Endothelial cell of umbilical vein (primary cell): ENCODE measurements at regions of chr4 and their contacts with region 1.

Region 1: DNA sequence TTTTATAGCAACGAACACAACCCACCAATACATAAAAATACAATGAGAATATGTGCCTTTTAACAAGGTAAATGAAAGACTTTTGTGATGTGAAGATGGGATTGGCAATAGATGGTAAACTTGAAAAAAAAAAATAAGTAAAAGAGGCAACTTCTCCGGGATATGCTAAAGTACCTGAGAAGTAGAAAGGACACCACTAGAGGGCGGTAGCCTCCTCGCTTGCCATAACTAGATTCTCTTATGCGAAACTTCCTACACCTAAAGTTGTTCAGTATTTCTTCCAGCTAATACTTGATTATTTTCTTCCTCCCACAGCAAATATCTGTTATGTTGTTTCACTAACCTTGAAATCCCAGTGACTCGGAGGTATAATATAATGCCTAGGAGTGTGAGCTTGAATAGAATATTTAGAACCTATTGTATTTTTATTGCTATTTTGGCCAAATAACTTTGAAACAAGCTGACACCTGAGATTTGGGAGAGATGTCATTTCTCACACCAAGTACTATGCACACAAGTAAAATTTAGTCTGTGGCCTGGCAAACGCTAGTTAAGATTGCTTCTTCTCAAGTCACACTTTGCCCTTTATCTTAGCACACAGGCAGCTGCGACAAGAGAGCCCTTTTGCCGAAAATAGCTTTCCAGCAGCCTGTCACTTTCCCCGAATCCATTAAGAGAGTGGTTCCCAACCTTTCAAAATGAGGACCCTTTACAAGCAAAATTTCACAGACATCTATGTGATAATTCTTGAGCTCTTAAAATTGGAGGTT is 44.9 kb upstream of the PDLIM5 start:
- DNase-seq: peak; percentile 86
- H3K4me3 ChIP-seq: no peak overlapping the region
- H3K27ac ChIP-seq: no peak overlapping the region
- H3K4me1 ChIP-seq: peaks cover 9% of the 10 kb centered on the region
- H3K27me3 ChIP-seq: no peaks in the 10 kb centered on the region
- CTCF ChIP-seq: peak; percentile 74 to 77
- POLR2A ChIP-seq: no peak

Region 2: GRCh38 chr4:94332983-94333590 is 73.8 kb before region 1 on chr4:
- CTCF ChIA-PET with region 1: interaction called, 11 read pairs
- POLR2A ChIA-PET with region 1: no interaction called
- dilution Hi-C with region 1: no loop called
- intact Hi-C with region 1: no loop called
- DNase-seq: peak; percentile 28
- H3K4me3 ChIP-seq: no peak overlapping the region
- H3K27ac ChIP-seq: no peak overlapping the region
- H3K4me1 ChIP-seq: no peaks in the 10 kb centered on the region
- H3K27me3 ChIP-seq: no peaks in the 10 kb centered on the region
- CTCF ChIP-seq: peak in 1 of 2 donors; percentile 32
- POLR2A ChIP-seq: no peak

Region 3: GRCh38 chr4:94451695-94452475 is 45.0 kb after region 1 on chr4 and contains the start of gene PDLIM5:
- CTCF ChIA-PET with region 1: interaction called, 62 read pairs
- POLR2A ChIA-PET with region 1: interaction called, 6 read pairs
- dilution Hi-C with region 1: no loop called
- intact Hi-C with region 1: loop called (anchors 1 kb)
- DNase-seq: peak; percentile 93
- H3K4me3 ChIP-seq: peak within 1 kb of the TSS; percentile 60 to 99 (median 98)
- H3K27ac ChIP-seq: peak within 1 kb of the TSS; percentile 80
- H3K4me1 ChIP-seq: peaks cover 40% of the 10 kb centered on the region
- H3K27me3 ChIP-seq: no peaks in the 10 kb centered on the region
- CTCF ChIP-seq: no peak
- POLR2A ChIP-seq: peak; percentile 96
- total RNA-seq, gene PDLIM5: 310 and 323 TPM in 2 replicates

Region 4: DNA sequence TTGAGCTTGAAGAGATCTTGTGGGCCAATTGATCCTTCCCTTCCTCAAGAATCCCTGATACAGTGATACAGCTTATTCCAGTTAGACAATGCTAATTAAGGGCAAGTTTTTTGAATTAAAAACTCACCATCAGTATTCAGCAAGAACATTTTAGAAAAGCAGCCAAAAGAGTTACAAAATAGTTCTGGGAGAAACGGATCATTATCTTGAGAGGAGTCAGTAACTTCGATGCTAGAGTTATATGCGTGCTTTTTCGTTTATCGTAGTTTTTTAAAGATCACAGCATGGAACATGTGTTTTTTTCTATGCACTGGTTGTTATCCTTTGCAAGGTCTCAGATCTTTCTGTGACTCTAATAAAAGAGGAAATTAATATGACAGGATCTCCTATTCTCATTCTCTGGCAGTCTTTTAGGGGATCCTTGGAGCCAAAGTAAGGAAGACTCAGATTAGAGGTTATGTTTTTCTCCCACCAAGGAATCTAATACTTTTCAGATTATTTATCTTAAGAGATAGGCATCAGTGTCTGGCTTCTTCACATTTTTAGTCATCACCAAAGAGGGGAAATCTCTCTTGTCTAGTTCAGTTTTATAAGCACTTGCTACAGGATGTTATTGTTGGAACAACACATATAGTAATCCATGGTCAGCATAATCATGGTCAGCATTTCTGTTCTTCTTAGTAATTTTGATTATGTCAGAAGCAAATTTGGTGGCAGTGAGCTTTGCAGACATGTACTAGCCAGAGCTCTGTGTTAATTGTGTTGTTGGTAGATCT is 154.6 kb after region 1 on chr4:
- CTCF ChIA-PET with region 1: interaction called, 15 read pairs
- POLR2A ChIA-PET with region 1: no interaction called
- dilution Hi-C with region 1: no loop called
- intact Hi-C with region 1: no loop called
- DNase-seq: peak; percentile 90
- H3K4me3 ChIP-seq: peak overlapping the region in 1 of 3 experiments; percentile 7
- H3K27ac ChIP-seq: peak overlapping the region; percentile 73
- H3K4me1 ChIP-seq: peaks cover 68% of the 10 kb centered on the region
- H3K27me3 ChIP-seq: no peaks in the 10 kb centered on the region
- CTCF ChIP-seq: no peak
- POLR2A ChIP-seq: peak; percentile 63

Region 5: DNA sequence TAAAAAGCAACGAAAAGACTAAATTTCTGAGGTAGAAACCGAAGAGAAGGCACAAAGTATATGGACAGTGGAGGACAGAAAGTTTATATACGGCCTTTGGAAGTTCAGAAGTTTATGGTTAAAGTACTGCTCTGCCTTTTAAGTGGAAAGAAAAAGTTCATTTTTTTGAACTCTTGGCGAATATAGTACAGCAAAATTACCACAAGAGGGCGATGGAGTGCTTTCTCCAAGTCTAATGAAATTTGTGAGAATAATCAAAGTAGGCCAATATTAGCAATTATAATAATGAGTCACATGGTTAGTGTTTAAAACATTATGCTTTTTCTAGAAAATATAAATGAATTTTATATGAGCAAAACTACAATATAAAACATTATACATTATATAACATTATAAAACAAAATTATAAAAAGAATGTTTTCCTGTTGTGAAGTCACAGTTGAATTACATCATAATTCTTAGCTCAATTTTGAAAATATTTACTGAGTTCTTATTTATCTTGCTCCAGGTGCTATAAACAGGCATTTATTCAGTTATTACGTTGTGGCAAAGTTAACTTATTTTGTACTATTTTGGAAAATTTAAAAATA is 214.7 kb after region 1 on chr4:
- CTCF ChIA-PET with region 1: interaction called, 23 read pairs
- POLR2A ChIA-PET with region 1: no interaction called
- dilution Hi-C with region 1: no loop called
- intact Hi-C with region 1: no loop called
- DNase-seq: peak; percentile 64
- H3K4me3 ChIP-seq: no peak overlapping the region
- H3K27ac ChIP-seq: peak overlapping the region; percentile 7
- H3K4me1 ChIP-seq: no peaks in the 10 kb centered on the region
- H3K27me3 ChIP-seq: no peaks in the 10 kb centered on the region
- CTCF ChIP-seq: peak; percentile 43 to 55
- POLR2A ChIP-seq: no peak

Region 6: DNA sequence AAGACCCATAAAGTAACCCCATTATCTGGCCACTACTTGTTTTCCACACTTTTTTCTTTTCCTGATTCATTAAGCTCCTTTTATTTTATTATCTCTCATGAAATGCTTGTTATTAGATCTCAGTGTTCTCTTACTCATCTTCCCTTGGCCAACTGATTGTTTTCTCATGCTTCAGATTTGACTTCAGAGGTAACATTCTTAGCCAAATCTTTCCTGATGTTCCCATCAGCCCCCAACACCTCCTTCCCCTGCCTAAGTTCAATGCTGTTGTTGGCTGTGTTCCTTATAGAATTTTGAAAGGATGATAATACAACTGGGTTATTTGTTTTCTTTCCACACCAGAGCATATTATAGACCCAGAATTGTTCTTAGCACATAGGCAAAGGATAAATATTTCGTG is 426.5 kb after region 1 on chr4:
- CTCF ChIA-PET with region 1: no interaction called
- POLR2A ChIA-PET with region 1: no interaction called
- dilution Hi-C with region 1: no loop called
- intact Hi-C with region 1: no loop called
- DNase-seq: no peak
- H3K4me3 ChIP-seq: no peak overlapping the region
- H3K27ac ChIP-seq: no peak overlapping the region
- H3K4me1 ChIP-seq: no peaks in the 10 kb centered on the region
- H3K27me3 ChIP-seq: no peaks in the 10 kb centered on the region
- CTCF ChIP-seq: no peak
- POLR2A ChIP-seq: no peak